PC-9 (cell line): ENCODE measurements at regions of chr13 and their contacts with region 1.

Region 1: DNA sequence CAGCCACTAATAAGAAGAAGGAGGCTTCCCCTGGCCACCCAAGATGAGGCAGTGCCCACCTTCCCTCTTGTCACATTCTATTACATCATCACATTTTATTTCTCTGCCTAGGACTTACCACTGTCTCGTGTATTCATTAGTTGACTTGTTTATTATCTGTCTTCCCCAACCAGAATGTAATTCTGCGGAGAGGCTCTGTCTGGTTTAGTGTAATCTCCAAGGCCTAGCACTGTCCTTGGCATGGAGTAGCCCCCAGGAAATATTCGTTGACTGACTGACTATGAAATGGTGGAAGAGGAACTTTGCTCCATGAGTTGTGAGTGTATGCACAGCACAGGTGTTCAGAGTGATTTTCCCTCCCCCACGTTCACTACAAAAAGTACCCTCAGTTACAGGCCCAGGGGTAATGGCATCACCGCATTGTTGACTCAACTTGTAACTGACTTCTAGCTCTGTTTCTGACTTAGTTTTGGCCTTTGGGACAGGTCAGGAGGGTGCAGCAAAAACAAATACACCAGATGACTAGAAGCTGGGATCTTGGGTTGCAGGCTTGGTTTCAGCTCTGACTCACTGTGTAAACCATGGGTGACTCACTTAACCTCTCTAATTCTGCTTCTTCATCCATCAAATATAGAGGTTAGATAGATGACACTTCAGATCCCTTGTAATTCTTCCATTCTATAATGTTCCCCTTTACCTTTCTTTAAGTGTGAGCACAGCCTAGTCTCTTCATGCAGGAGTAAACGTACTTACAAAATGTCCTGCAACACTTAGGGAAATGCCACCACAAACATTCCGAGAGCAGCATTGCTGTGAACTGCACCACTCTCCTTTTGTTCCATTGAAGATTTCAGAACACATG is 229.7 kb downstream of the KCNRG start:
- DNase-seq: peak; percentile 72 to 97
- H3K4me3 ChIP-seq: no peak overlapping the region
- H3K27ac ChIP-seq: peak overlapping the region; percentile 67
- H3K4me1 ChIP-seq: peaks cover 23% of the 10 kb centered on the region
- H3K27me3 ChIP-seq: no peaks in the 10 kb centered on the region
- CTCF ChIP-seq: no peak

Region 2: GRCh38 chr13:50006426-50007135 is 238.4 kb before region 1 on chr13:
- CTCF ChIA-PET with region 1: interaction called, 24 read pairs
- POLR2A ChIA-PET with region 1: no interaction called
- intact Hi-C with region 1: no loop called
- DNase-seq: no peak
- H3K4me3 ChIP-seq: no peak overlapping the region
- H3K27ac ChIP-seq: no peak overlapping the region
- H3K4me1 ChIP-seq: no peaks in the 10 kb centered on the region
- H3K27me3 ChIP-seq: no peaks in the 10 kb centered on the region
- CTCF ChIP-seq: no peak

Region 3: DNA sequence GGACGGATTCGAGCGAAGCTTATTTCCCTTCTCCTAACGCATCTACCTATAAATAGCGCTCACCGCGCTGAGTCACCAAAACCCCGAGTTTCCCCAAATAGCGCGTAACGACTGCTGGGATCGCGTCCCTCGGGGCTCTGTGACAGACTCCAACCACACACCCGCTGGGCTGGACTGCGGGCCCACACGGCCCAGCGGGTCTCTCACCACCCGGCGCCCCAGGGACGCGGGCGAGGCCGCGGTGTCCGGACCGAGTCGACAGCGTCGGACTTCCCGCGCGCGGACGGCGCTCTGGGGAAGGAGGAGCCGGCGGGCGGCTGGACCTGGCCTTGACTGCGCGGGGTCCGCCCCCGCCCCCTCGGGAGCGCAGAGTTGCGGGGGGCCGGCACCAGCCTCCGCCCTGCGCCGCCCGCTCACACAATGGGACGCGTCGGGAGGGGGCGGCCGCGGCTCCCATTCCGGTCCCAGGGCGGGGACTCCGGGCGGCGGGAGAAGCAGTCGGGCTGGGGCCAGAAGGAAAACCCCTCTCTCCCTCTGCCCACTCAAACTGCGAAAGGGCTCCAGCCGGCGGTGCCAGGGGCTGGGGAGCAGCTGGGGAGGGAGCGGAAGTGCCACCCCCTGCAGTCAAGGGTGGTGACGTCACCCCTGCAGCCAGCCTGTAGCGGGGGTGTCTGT is 120.9 kb before region 1 on chr13:
- CTCF ChIA-PET with region 1: no interaction called
- POLR2A ChIA-PET with region 1: interaction called, 4 read pairs
- intact Hi-C with region 1: loop called (anchors 1 kb)
- DNase-seq: peak; percentile 82 to 93
- H3K4me3 ChIP-seq: peak overlapping the region; percentile 91
- H3K27ac ChIP-seq: peak overlapping the region; percentile 80
- H3K4me1 ChIP-seq: peaks cover 24% of the 10 kb centered on the region
- H3K27me3 ChIP-seq: no peaks in the 10 kb centered on the region
- CTCF ChIP-seq: no peak

Region 4: GRCh38 chr13:50626101-50626547 is 381.2 kb after region 1 on chr13:
- CTCF ChIA-PET with region 1: no interaction called
- POLR2A ChIA-PET with region 1: no interaction called
- intact Hi-C with region 1: no loop called
- DNase-seq: no peak
- H3K4me3 ChIP-seq: no peak overlapping the region
- H3K27ac ChIP-seq: no peak overlapping the region
- H3K4me1 ChIP-seq: no peaks in the 10 kb centered on the region
- H3K27me3 ChIP-seq: no peaks in the 10 kb centered on the region
- CTCF ChIP-seq: no peak